ENCODE measurements at regions of chr9 and their contacts with region 1.

Region 1: GRCh38 chr9:137029058-137029936 is 1.3 kb upstream of the ABCA2 start:
- DNase-seq: peak; percentile 59
- H3K4me3 ChIP-seq: no peak overlapping the region
- H3K27ac ChIP-seq: no peak overlapping the region
- H3K4me1 ChIP-seq: peaks cover 12% of the 10 kb centered on the region
- H3K27me3 ChIP-seq: no peaks in the 10 kb centered on the region
- CTCF ChIP-seq: peak; percentile 90 to 98
- POLR2A ChIP-seq: no peak

Region 2: GRCh38 chr9:136949817-136950655 is 79.3 kb before region 1 on chr9:
- CTCF ChIA-PET with region 1: interaction called, 111 read pairs
- POLR2A ChIA-PET with region 1: no interaction called
- dilution Hi-C with region 1: no loop called
- intact Hi-C with region 1: no loop called
- DNase-seq: peak; percentile 93
- H3K4me3 ChIP-seq: peak overlapping the region; percentile 4 to 77 (median 9)
- H3K27ac ChIP-seq: no peak overlapping the region
- H3K4me1 ChIP-seq: peaks cover 5% of the 10 kb centered on the region
- H3K27me3 ChIP-seq: no peaks in the 10 kb centered on the region
- CTCF ChIP-seq: no peak
- POLR2A ChIP-seq: peak; percentile 57

Region 3: GRCh38 chr9:136991993-136992818 is 37.1 kb before region 1 on chr9 and contains the start of gene PAXX:
- CTCF ChIA-PET with region 1: interaction called, 14 read pairs
- POLR2A ChIA-PET with region 1: no interaction called
- dilution Hi-C with region 1: no loop called
- intact Hi-C with region 1: no loop called
- DNase-seq: peak; percentile 80
- H3K4me3 ChIP-seq: peak within 1 kb of the TSS; percentile 47 to 56 (median 54)
- H3K27ac ChIP-seq: peak within 1 kb of the TSS; percentile 25
- H3K4me1 ChIP-seq: peaks cover 18% of the 10 kb centered on the region
- H3K27me3 ChIP-seq: no peaks in the 10 kb centered on the region
- CTCF ChIP-seq: no peak
- POLR2A ChIP-seq: no peak
- total RNA-seq, gene PAXX: 35.0 and 38.7 TPM in 2 replicates

Region 4: DNA sequence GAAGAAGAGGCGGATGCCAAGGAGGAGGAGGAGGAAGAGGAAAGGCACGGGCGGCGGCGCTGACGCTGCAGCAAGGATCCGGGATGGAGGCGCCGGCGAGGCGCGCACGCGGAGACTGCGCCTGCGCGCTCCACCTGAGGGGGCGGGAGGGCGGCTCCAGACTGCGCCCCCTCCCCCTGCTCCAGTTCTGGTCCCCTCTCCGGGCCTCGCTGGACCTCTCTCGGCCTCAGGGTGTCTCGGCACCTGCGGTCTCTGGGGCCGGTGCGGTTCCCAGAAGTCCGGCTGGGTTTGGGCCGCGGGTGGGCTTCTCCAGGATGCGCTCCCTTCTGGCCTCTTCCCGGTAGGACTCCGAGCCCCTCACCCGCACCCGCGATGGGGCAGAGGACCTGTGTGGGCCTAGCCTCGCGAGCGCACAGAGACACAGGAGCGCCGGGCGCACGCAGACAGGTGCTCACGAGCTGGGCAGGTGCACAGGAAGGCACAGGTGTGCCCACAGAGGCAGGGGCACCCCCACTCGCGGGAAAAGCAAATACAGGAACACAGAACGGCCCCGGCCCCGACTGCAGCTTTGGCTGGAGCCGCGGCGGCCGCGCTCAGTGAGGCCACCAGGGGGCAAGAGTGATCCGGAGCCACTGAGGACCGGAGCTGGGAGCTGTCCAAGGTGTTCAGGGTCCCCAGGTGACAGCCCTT is 16.9 kb after region 1 on chr9 and contains the start of gene NPDC1:
- CTCF ChIA-PET with region 1: interaction called, 58 read pairs
- POLR2A ChIA-PET with region 1: no interaction called
- dilution Hi-C with region 1: no loop called
- intact Hi-C with region 1: loop called (anchors 2 kb)
- DNase-seq: peak; percentile 79
- H3K4me3 ChIP-seq: peak within 1 kb of the TSS; percentile 44 to 57 (median 54)
- H3K27ac ChIP-seq: peak within 1 kb of the TSS; percentile 41
- H3K4me1 ChIP-seq: peaks cover 35% of the 10 kb centered on the region
- H3K27me3 ChIP-seq: peaks cover 0 to 3% of the 10 kb centered on the region in 2 experiments
- CTCF ChIP-seq: peak; percentile 94 to 96
- POLR2A ChIP-seq: peak; percentile 63
- total RNA-seq, gene NPDC1: 157 and 181 TPM in 2 replicates

Region 5: DNA sequence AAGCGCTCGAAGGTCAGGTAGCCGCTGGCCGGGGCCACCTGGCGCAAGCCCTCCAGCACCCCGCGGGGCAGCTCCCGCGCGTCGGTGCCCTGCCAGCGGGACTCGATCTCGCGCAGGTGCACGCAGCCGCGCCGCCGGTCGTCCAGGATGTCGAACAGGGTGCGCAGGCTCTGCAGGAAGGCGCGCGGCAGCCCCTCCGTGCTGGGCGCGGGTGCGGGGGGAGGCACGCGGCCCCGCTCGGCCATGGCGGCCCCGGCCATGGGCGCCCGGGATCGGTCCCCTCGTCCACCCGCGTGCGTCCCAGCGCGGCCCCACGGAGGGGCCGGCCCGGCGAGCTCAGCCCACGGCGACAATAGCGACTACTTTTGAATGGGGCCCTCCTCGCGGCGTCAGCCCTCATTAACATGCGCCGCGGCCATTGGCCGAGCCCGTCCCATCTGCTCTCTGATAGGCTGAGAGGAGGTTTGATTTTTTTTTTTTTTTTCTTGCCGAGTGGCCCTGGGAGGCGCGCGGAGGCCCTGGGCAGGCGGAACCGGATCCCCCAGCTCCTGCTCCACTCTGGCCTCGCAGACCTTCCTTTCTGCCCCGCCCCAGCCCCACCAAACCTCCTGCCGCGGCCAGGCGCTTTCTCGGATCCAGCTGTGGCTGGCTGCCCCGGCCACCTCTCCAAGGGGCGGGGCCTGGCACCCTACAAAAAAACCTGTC is 41.1 kb after region 1 on chr9 and contains the start of gene SAPCD2:
- CTCF ChIA-PET with region 1: interaction called, 34 read pairs
- POLR2A ChIA-PET with region 1: no interaction called
- dilution Hi-C with region 1: no loop called
- intact Hi-C with region 1: no loop called
- DNase-seq: peak; percentile 84
- H3K4me3 ChIP-seq: peak within 1 kb of the TSS; percentile 37 to 49 (median 39)
- H3K27ac ChIP-seq: no peak within 1 kb of the TSS
- H3K4me1 ChIP-seq: peaks cover 11% of the 10 kb centered on the region
- H3K27me3 ChIP-seq: no peaks in the 10 kb centered on the region
- CTCF ChIP-seq: no peak
- POLR2A ChIP-seq: peak; percentile 75
- total RNA-seq, gene SAPCD2: 24.3 and 27.8 TPM in 2 replicates

Region 6: GRCh38 chr9:137097761-137098462 is 68.6 kb after region 1 on chr9:
- CTCF ChIA-PET with region 1: no interaction called
- POLR2A ChIA-PET with region 1: no interaction called
- dilution Hi-C with region 1: no loop called
- intact Hi-C with region 1: no loop called
- DNase-seq: no peak
- H3K4me3 ChIP-seq: no peak overlapping the region
- H3K27ac ChIP-seq: no peak overlapping the region
- H3K4me1 ChIP-seq: no peaks in the 10 kb centered on the region
- H3K27me3 ChIP-seq: no peaks in the 10 kb centered on the region
- CTCF ChIP-seq: no peak
- POLR2A ChIP-seq: no peak

Measured in endothelial cell of umbilical vein (primary cell).